ENCODE measurements at regions of chr17 and their contacts with region 1.

Region 1: DNA sequence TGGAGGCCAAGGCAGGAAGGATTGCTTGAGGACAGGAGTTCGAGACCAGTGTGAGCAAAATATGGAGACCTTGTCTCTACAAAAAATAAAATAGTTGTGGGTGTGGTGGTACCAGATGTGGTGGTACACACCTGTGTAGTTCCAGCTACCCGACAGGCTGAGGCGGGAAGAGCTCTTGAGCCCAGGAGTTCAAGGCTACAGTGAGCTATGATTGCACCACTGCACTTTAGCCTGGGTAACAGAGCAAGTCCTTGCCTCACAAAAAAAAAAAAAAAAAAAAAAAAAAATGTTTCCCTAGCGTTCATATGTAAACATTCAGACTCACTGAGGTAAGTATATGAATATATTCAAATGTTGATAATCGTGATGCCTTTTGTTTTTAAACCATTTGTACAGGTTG is 39.5 kb downstream of the CLUH start:
- DNase-seq: no peak
- ATAC-seq: no peak

Region 2: GRCh38 chr17:2613089-2613808 is 58.8 kb before region 1 on chr17:
- intact Hi-C with region 1: no loop called
- DNase-seq: no peak
- ATAC-seq: no peak

Region 3: DNA sequence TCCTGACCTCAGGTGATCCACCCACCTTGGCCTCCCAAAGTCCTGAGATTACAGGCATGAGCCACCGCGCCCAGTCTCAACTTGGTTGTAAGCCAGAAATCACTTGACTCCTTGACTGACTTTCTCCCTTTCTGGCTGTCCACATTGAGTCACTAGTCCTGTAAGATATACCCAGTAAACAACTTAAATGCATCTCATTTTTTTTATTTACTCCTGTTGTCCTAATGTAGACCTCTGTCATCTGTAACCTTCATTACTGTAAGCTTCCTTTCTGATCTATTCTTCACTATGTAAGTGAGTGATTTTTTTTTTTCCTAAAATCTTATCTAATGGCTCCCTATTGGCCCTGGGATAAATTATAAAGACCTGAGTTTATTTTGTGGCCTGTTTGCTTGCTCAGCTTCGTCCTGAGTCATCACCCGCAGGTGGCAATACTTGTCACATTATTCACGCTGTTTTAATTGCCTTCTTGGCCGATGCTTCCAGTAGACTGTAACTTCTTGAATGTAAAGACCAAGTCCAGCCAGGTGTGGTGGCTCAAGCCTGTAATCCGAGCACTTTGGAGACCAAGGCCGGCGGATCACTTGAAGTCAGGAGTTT is 37.6 kb before region 1 on chr17:
- intact Hi-C with region 1: loop called (anchors 5 kb)
- DNase-seq: no peak
- ATAC-seq: no peak